ENCODE measurements at regions of chr9 and their contacts with region 1.

Region 1: DNA sequence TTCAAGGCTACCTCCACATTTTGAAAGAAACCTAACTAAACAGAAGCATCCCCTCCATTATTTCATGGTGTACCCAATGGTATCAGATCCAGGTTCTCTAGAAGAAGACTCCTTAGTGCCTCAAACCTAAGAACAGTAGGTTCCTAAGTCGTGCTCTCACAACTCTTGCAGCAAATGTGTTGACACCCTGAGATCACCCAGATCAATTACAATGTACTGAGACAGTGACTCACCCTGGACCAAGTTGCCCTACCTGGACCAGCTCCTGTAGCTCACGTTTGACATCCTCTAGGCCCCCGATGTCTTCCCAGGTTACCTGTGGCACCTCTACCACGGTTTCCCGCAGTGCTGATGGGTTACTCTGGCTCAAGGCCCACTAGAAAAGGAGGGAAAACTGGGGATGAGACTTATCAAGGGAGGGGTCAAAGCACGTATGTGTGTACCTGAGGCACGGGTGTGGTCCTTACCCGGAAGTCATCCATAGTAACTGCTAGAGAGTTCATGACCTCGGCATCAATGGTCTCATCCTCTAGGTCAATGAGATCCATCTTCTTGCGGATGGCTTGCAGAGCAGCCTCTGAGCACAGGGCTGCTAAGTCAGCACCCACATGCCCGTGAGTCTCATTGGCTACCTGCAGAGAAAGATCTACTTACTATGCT is 11.7 kb downstream of the VCP start:
- DNase-seq: no peak
- H3K4me3 ChIP-seq: no peak overlapping the region
- H3K27ac ChIP-seq: no peak overlapping the region
- H3K4me1 ChIP-seq: no peaks in the 10 kb centered on the region
- H3K27me3 ChIP-seq: no peaks in the 10 kb centered on the region

Region 2: DNA sequence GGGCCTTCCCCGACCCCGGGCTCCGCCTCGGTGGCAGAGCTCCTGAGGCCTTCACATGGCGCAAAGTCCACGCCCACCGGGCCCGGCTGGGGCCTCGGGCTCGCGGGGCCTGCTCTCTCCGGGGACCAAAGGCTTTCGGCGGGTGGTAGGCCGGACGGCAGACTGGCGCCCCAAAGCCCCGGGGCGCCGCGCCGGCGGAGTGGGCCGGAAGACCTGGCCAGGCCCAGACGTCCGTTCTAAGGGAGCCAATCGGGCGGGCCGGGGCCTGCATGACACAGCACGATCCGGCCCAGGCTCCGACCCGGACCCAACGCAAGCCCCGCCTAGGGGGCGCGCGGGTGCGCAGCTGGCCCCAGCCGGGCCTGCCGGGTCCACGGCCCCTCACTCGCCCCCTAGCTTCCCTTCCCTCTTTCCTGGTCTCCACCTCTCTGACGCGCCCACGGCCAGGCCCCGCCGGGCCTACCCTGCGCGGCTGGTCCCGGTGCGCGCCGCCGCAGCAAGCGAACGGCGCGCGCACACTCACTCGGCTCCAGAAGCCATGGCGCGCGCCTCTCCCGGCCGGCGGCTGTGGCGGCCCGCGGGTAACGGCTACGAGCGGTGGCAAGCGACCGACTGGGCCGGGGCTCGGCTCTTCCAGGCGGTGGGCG is 11.3 kb after region 1 on chr9:
- CTCF ChIA-PET with region 1: interaction called, 20 read pairs
- POLR2A ChIA-PET with region 1: interaction called, 10 read pairs
- DNase-seq: peak; percentile 93 to 96 (median 95)
- H3K4me3 ChIP-seq: peak overlapping the region; percentile 83 to 98 (median 92)
- H3K27ac ChIP-seq: peak overlapping the region; percentile 98 to 99
- H3K4me1 ChIP-seq: peaks cover 20 to 38% (median 25%) of the 10 kb centered on the region in 4 experiments
- H3K27me3 ChIP-seq: no peaks in the 10 kb centered on the region